Spleen (tissue), 13 donors: ENCODE measurements at regions of chr19 and their contacts with region 1.

Region 1: DNA sequence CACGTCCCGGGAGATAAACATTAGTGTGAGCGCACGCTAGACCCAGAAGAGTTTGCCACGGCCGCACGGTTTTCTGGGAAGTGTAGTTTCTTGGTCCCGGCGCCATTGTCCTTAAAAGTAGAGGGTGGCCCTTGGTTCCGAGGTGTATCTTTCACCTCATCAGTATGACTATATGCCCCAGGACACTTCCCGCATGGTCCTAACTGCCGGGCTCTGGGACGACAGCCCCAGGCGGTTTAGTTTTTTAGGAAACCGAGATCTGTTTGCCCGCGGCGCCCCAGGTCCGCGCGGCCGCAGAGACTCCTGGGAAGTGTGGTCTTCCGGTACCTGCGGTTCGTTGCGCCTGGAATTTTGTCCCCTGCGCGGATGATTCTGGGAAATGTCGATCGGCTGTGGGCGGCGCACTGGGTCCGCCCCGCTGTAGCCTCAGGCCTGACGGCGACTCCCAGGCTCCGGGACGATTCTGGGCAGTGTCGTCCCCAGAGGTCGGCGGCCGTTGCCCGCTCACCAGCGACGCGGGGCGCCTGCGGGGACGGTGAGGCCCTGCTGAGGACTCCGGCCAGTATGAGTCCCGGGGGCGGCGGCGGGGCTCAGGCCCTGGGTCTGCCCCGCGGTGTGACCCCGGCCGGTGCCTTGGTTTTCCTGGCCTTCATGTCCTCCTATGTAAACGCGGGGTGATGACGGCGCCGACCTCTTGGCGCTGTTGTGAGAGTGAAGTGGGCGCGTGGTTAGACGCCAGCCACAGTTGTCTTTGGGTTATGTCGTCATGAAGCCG is at the start of gene ZNF181:
- DNase-seq: peak; percentile 94
- H3K4me3 ChIP-seq: peak within 1 kb of the TSS; percentile 65 to 95 (median 70)
- H3K27ac ChIP-seq: peak within 1 kb of the TSS; percentile 91 to 97 (median 94)
- H3K4me1 ChIP-seq: peaks cover 13 to 38% (median 27%) of the 10 kb centered on the region in 6 donors
- H3K27me3 ChIP-seq: no peaks in the 10 kb centered on the region
- CTCF ChIP-seq: peak in 2 of 11 experiments; percentile 6 to 8
- POLR2A ChIP-seq: no peak
- total RNA-seq, gene ZNF181: 7.9 to 36.5 (median 13.8) TPM

Region 2: DNA sequence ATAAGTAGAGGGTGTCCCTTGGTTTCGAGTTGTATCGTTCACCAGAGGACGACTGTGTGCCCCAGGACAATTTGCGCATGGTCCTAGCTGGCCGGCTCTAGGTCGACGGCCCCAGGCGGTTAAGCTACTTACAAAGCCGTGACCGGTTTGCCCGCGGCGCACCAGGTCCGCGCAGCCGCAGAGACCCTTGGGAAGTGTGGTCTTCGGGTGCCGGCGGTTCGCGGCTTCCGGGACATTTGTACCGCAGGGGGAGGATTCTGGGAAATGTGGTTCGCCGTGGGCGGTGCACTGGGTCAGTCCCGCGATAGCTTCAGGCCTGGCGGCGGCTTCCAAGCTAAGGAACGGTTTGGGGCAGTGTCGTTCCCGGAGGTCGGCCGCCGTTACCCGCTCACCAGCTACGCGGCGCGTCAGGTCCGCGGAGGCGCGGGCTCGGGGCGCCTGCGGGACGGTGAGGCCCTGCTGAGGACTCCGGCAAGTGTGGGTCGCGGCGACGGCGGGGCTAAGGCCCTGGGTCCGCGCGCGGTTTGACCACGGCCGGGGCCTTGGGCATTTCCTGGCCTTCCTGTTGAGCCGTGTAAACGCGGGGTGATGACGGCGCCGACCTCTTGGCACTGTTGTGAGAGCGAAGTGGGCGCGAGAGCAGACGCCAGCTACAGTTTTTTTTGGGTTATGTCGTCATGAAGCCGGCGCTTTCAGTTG is 56.5 kb before region 1 on chr19 and contains the start of gene ZNF302:
- intact Hi-C with region 1: loop called (anchors 10 kb)
- DNase-seq: peak; percentile 98
- H3K4me3 ChIP-seq: peak within 1 kb of the TSS; percentile 58 to 88 (median 70)
- H3K27ac ChIP-seq: peak within 1 kb of the TSS; percentile 92 to 99 (median 96)
- H3K4me1 ChIP-seq: peaks cover 6 to 34% (median 26%) of the 10 kb centered on the region in 6 donors
- H3K27me3 ChIP-seq: no peaks in the 10 kb centered on the region
- CTCF ChIP-seq: peak in 3 of 11 experiments; percentile 29 to 35 (median 34)
- POLR2A ChIP-seq: peak in 1 of 3 donors; percentile 25
- total RNA-seq, gene ZNF302: 24.7 to 36.1 (median 33.0) TPM